Sciatic nerve (tissue), 2 donors: ENCODE measurements at regions of chr5 and their contacts with region 1.

Region 1: DNA sequence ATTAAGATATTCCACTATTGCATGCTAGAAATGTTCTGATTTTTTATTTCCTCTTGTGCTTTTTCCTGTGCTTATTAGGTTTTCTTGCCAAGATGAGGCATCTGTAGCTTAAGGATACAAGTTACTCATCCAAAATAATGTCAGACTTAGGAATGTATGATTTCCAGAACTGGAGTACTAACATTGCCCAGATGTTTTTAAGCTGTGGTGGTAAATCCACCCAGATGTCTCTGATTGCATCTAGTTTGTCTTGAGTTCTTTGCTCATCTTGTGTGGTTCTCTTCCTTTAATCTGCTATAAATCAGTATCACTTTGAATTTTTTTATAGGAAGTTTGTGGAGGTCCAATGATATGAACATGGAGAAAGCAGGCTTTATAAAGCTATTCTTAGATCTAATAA is 337.5 kb upstream of the ZNF608 start:
- DNase-seq: no peak
- ATAC-seq: no peak

Region 2: GRCh38 chr5:125113328-125113727 is 29.3 kb after region 1 on chr5:
- intact Hi-C with region 1: loop called (anchors 1 kb)
- DNase-seq: no peak
- ATAC-seq: no peak

Region 3: GRCh38 chr5:125295405-125295872 is 211.5 kb after region 1 on chr5:
- intact Hi-C with region 1: no loop called
- DNase-seq: no peak
- ATAC-seq: no peak